AG04449 (cell line): ENCODE measurements at regions of chr17 and their contacts with region 1.

Region 1: GRCh38 chr17:46002311-46002972 is 3.4 kb downstream of the STH start:
- DNase-seq: no peak
- H3K4me3 ChIP-seq: no peak overlapping the region
- CTCF ChIP-seq: peak; percentile 69

Region 2: GRCh38 chr17:45857977-45858709 is 144.3 kb before region 1 on chr17:
- CTCF ChIA-PET with region 1: no interaction called
- POLR2A ChIA-PET with region 1: no interaction called
- DNase-seq: no peak
- H3K4me3 ChIP-seq: no peak overlapping the region
- CTCF ChIP-seq: no peak

Region 3: GRCh38 chr17:45907750-45908395 is 94.6 kb before region 1 on chr17:
- CTCF ChIA-PET with region 1: no interaction called
- POLR2A ChIA-PET with region 1: no interaction called
- DNase-seq: no peak
- H3K4me3 ChIP-seq: no peak overlapping the region
- CTCF ChIP-seq: no peak

Region 4: DNA sequence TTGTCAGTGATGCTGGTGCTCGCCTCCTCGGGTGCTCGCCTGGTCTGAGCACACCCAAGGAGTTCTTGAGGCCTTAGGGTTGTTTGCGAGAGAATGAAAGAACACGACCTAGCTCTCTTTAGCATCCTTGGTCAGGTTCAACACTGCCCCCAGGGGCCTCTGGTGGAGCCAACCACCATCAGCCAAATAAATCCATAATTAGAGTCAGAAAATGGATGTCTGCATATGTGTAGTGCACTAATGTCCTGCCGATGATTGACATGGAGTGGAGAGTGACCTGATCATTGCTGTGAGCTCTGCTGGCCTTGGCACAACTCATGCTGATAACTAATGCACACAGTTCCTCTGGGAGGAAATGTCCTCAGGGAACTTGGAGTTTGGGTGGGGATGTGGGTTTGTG is 11.6 kb before region 1 on chr17:
- CTCF ChIA-PET with region 1: interaction called, 24 read pairs
- POLR2A ChIA-PET with region 1: no interaction called
- DNase-seq: no peak
- H3K4me3 ChIP-seq: no peak overlapping the region
- CTCF ChIP-seq: no peak

Region 5: GRCh38 chr17:46013502-46014165 is 11.2 kb after region 1 on chr17:
- CTCF ChIA-PET with region 1: interaction called, 29 read pairs
- POLR2A ChIA-PET with region 1: no interaction called
- DNase-seq: peak; percentile 10
- H3K4me3 ChIP-seq: no peak overlapping the region
- CTCF ChIP-seq: no peak

Region 6: DNA sequence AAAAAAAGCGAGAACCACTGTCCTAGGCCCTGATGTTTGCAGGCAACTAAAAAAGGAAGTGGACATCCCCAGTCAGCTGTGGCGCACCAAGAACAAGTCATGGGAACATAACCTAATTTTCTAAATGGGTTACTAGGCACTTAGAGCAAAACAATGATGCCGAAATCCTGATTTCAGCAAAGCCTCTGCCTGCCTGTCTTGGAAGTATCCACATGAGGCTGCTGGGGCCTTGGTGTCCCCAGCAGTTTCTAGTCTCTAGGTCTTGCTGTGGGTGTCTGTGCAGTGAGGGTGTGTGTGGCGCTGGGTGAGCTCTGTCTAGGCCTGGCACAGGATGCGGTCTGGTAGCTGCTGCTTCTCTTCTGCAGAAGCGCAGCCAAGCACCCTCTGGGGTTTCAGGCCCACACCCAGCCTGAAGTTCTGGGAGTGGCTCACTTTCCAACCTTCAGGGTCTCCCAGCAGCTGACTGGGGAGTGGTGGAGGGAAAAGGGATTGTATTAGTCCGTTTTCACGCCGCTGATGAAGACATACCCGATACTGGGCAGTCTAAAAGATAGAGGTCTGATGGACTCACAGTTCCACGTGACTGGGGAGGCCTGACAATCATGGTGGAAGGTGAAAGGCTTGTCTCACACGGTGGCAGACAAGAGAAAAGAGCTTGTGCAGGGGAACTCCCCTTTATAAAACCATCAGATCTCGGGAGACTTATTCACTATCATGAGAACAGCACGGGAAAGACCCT is 17.8 kb after region 1 on chr17:
- CTCF ChIA-PET with region 1: interaction called, 11 read pairs
- POLR2A ChIA-PET with region 1: no interaction called
- DNase-seq: no peak
- H3K4me3 ChIP-seq: no peak overlapping the region
- CTCF ChIP-seq: no peak

Region 7: DNA sequence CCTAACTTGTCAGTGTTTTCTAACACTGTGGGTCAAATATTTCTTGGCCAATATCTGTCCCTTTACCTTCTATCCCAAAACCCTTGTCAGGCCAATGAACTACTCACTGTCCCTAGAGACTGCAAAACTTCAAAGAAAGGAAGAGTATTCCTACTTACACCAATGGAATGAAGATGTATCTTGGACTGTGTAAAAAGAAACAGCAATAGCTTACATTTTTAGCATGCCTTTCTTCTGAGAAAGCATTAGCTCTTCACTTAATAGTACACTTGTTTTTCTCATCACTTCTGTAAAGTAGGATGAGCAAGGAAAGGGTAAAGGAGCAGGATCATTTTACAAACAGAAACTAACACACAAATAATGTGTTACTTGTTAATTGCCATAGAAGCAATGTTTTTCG is 70.6 kb after region 1 on chr17:
- CTCF ChIA-PET with region 1: no interaction called
- POLR2A ChIA-PET with region 1: no interaction called
- DNase-seq: peak; percentile 44
- H3K4me3 ChIP-seq: no peak overlapping the region
- CTCF ChIP-seq: no peak

Region 8: GRCh38 chr17:46199379-46199778 is 196.9 kb after region 1 on chr17:
- CTCF ChIA-PET with region 1: interaction called, 18 read pairs
- POLR2A ChIA-PET with region 1: no interaction called
- DNase-seq: no peak
- H3K4me3 ChIP-seq: no peak overlapping the region
- CTCF ChIP-seq: no peak

Region 9: DNA sequence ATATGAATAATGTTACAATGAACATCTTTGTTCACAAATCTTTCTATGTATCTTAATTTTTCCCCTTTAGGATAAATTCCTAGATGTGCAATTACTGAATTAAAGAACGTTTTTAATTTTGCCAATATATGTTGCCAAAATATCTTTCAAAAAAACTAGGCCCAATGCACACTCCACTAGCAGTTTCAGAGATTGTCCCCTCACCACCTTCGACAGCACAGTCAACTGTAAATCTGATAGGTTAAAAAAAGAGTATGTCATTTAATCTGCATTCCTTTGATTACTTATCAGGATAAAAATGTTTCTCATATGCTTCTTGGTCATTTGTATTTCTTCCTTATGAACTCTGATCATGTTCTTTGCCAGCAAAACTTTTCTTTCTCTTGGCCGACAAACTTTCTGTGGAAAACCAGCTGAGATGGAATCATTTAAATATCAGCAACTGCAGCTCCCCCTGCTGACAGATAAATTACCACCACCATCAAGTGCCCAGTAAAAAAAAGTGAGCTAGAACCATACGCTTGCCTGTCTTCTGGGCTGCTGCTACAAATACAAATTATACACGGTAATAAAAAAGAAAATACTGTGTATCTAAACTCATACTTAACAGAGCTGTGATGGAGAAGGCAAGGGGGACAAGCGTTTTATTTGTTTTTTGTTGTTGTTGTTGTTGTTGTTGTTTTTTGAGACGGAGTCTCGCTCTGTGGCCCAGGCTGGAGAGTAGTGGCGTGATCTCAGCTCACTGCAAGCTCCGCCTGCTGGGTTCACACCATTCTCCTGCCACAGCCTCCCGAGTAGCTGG is 210.4 kb after region 1 on chr17:
- CTCF ChIA-PET with region 1: interaction called, 117 read pairs
- POLR2A ChIA-PET with region 1: no interaction called
- DNase-seq: peak; percentile 28
- H3K4me3 ChIP-seq: no peak overlapping the region
- CTCF ChIP-seq: peak; percentile 49